Naive thymus-derived CD4-positive, alpha-beta T cell (primary cell): ENCODE measurements at regions of chr6 and their contacts with region 1.

Region 1: GRCh38 chr6:75243333-75244062 is at the start of gene COX7A2:
- DNase-seq: peak; percentile 66 to 91 (median 83)
- ATAC-seq: peak; percentile 98
- H3K4me3 ChIP-seq: peak within 1 kb of the TSS; percentile 84
- H3K4me3 Mint-ChIP-seq: peak within 1 kb of the TSS; percentile 88 to 99 (median 98)
- H3K27ac ChIP-seq: peak within 1 kb of the TSS; percentile 90
- H3K27ac Mint-ChIP-seq: peak within 1 kb of the TSS; percentile 94 to 100 (median 98)
- H3K4me1 ChIP-seq: peaks cover 10 to 11% of the 10 kb centered on the region in 2 donors
- H3K4me1 Mint-ChIP-seq: peaks cover 9 to 53% (median 33%) of the 10 kb centered on the region in 7 donors
- H3K27me3 ChIP-seq: no peaks in the 10 kb centered on the region
- H3K27me3 Mint-ChIP-seq: peaks cover 0 to 17% (median 15%) of the 10 kb centered on the region in 5 donors
- total RNA-seq, gene COX7A2: 159 to 395 (median 183) TPM

Region 2: GRCh38 chr6:73585566-73586415 is 1657.7 kb before region 1 on chr6:
- CTCF ChIA-PET with region 1: no interaction called
- POLR2A ChIA-PET with region 1: no interaction called
- intact Hi-C with region 1: loop called in 1 of 2 experiments (anchors 2 kb)
- DNase-seq: peak in 7 of 9 donors; percentile 55 to 76 (median 67)
- ATAC-seq: peak; percentile 82
- H3K4me3 ChIP-seq: peak overlapping the region; percentile 51
- H3K4me3 Mint-ChIP-seq: peak overlapping the region; percentile 78 to 90 (median 86)
- H3K27ac ChIP-seq: peak overlapping the region; percentile 89
- H3K27ac Mint-ChIP-seq: peak overlapping the region; percentile 91 to 100 (median 99)
- H3K4me1 ChIP-seq: peaks cover 6 to 16% of the 10 kb centered on the region in 2 donors
- H3K4me1 Mint-ChIP-seq: peaks cover 22 to 27% (median 24%) of the 10 kb centered on the region in 7 donors
- H3K27me3 ChIP-seq: no peaks in the 10 kb centered on the region
- H3K27me3 Mint-ChIP-seq: no peaks in the 10 kb centered on the region

Region 3: GRCh38 chr6:74946961-74947360 is 296.5 kb before region 1 on chr6:
- CTCF ChIA-PET with region 1: no interaction called
- POLR2A ChIA-PET with region 1: no interaction called
- intact Hi-C with region 1: no loop called
- DNase-seq: no peak
- ATAC-seq: no peak
- H3K4me3 ChIP-seq: no peak overlapping the region
- H3K4me3 Mint-ChIP-seq: no peak overlapping the region
- H3K27ac ChIP-seq: no peak overlapping the region
- H3K27ac Mint-ChIP-seq: no peak overlapping the region
- H3K4me1 ChIP-seq: no peaks in the 10 kb centered on the region
- H3K4me1 Mint-ChIP-seq: no peaks in the 10 kb centered on the region
- H3K27me3 ChIP-seq: no peaks in the 10 kb centered on the region
- H3K27me3 Mint-ChIP-seq: no peaks in the 10 kb centered on the region

Region 4: GRCh38 chr6:75130784-75131183 is 112.7 kb before region 1 on chr6:
- CTCF ChIA-PET with region 1: no interaction called
- POLR2A ChIA-PET with region 1: no interaction called
- intact Hi-C with region 1: no loop called
- DNase-seq: no peak
- ATAC-seq: no peak
- H3K4me3 ChIP-seq: no peak overlapping the region
- H3K4me3 Mint-ChIP-seq: no peak overlapping the region
- H3K27ac ChIP-seq: no peak overlapping the region
- H3K27ac Mint-ChIP-seq: no peak overlapping the region
- H3K4me1 ChIP-seq: no peaks in the 10 kb centered on the region
- H3K4me1 Mint-ChIP-seq: no peaks in the 10 kb centered on the region
- H3K27me3 ChIP-seq: no peaks in the 10 kb centered on the region
- H3K27me3 Mint-ChIP-seq: peaks cover 0 to 12% (median 9%) of the 10 kb centered on the region in 5 donors

Region 5: DNA sequence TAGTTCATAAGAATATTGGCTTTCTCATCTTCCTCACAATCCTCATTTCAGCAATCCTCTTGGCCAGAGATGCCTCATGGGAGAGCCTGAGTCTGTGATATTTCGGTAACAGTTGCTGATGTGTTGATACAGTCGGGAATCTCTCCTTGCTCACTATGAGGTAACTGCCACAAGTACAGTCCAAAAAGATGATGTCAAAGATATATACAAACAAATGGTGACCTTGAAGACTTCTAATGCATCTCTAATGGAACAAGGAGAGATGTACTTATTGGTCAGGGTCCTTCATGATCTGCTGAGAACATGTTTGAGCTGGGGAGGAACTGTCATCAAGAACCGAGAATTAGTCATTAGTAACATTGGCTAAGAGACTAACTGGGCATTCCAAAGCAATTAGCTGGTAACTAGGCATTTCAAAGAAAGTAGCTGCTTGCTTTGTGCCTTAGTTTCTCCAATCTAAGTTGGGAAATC is 194.0 kb after region 1 on chr6:
- CTCF ChIA-PET with region 1: no interaction called
- POLR2A ChIA-PET with region 1: no interaction called
- intact Hi-C with region 1: no loop called
- DNase-seq: no peak
- ATAC-seq: no peak
- H3K4me3 ChIP-seq: no peak overlapping the region
- H3K4me3 Mint-ChIP-seq: no peak overlapping the region
- H3K27ac ChIP-seq: no peak overlapping the region
- H3K27ac Mint-ChIP-seq: no peak overlapping the region
- H3K4me1 ChIP-seq: no peaks in the 10 kb centered on the region
- H3K4me1 Mint-ChIP-seq: no peaks in the 10 kb centered on the region
- H3K27me3 ChIP-seq: no peaks in the 10 kb centered on the region
- H3K27me3 Mint-ChIP-seq: peaks cover 0 to 20% (median 9%) of the 10 kb centered on the region in 5 donors

Region 6: GRCh38 chr6:75493400-75494064 is 250.0 kb after region 1 on chr6 and contains the start of gene FILIP1:
- CTCF ChIA-PET with region 1: no interaction called
- POLR2A ChIA-PET with region 1: no interaction called
- intact Hi-C with region 1: loop called in 1 of 2 experiments (anchors 2 kb)
- DNase-seq: no peak
- ATAC-seq: no peak
- H3K4me3 ChIP-seq: no peak within 1 kb of the TSS
- H3K4me3 Mint-ChIP-seq: no peak within 1 kb of the TSS
- H3K27ac ChIP-seq: no peak within 1 kb of the TSS
- H3K27ac Mint-ChIP-seq: no peak within 1 kb of the TSS
- H3K4me1 ChIP-seq: peaks cover 0 to 12% of the 10 kb centered on the region in 2 donors
- H3K4me1 Mint-ChIP-seq: peaks cover 0 to 14% (median 0%) of the 10 kb centered on the region in 7 donors
- H3K27me3 ChIP-seq: peaks cover 0 to 4% of the 10 kb centered on the region in 2 donors
- H3K27me3 Mint-ChIP-seq: peaks cover 42 to 73% (median 49%) of the 10 kb centered on the region in 5 donors
- total RNA-seq, gene FILIP1: 0.08 TPM in 1 of 5 experiments, not detected in the others

Region 7: DNA sequence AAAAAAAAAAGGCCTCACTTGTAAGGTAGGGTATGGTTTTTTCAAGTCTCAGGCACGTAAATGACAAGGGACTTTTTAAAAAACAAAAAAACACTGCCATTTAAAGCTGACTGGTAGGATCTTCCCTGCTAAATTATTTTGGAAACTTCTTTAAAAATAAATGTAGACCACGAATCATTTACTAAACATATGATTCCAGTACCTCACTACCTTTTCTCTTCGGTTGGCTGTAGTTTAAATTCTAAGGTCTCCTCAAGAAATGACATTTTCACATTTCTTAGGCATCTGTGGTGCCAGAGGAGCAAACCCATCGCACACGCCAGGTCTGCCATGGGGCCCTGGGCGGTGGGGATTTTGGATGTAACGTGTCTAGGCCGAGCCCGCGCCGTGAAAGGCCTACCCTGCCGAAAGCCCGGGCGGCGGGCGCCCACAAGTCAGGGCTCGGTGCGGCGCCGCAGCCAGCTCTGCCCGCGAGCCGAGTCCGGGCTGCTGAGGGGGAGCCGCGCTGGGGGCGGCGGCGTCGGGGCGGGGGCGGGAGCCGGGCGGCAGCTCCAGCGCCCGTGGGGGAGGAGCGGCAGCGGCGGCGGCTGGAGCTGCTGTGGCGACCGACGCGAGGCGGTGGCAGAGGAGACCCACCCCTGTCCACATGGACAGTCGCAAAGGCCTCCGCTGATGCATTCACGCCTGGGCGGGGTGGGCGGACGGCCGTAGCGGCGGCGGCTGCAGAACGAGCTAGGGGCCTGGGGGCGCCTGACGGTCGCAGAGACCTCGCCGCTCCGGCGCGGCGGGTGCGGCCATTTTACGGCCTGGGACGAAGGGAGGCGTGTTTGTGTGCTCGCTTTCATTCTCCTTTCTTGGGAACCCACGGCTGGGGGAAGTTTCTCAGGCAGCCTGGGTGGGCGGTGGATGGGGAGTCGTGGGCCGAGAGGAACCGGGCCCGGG is 358.1 kb after region 1 on chr6 and contains the start of gene SENP6:
- CTCF ChIA-PET with region 1: no interaction called
- POLR2A ChIA-PET with region 1: interaction called, 16 read pairs
- intact Hi-C with region 1: loop called (anchors 1 kb)
- DNase-seq: peak; percentile 68 to 81 (median 79)
- ATAC-seq: peak; percentile 80
- H3K4me3 ChIP-seq: peak within 1 kb of the TSS; percentile 87
- H3K4me3 Mint-ChIP-seq: peak within 1 kb of the TSS; percentile 78 to 100 (median 99)
- H3K27ac ChIP-seq: peak within 1 kb of the TSS; percentile 97
- H3K27ac Mint-ChIP-seq: peak within 1 kb of the TSS; percentile 97 to 99 (median 98)
- H3K4me1 ChIP-seq: peaks cover 26 to 37% of the 10 kb centered on the region in 2 donors
- H3K4me1 Mint-ChIP-seq: peaks cover 44 to 80% (median 72%) of the 10 kb centered on the region in 7 donors
- H3K27me3 ChIP-seq: no peaks in the 10 kb centered on the region
- H3K27me3 Mint-ChIP-seq: no peaks in the 10 kb centered on the region
- total RNA-seq, gene SENP6: 77.9 to 132 (median 124) TPM